ENCODE measurements at regions of chr14 and their contacts with region 1.

Region 1: GRCh38 chr14:64566651-64567122 is 16.9 kb downstream of the PPP1R36 start:
- DNase-seq: no peak
- H3K4me3 ChIP-seq: no peak overlapping the region
- H3K27ac ChIP-seq: peak overlapping the region; percentile 37 to 77 (median 62)
- H3K4me1 ChIP-seq: peaks cover 0 to 24% (median 5%) of the 10 kb centered on the region in 4 donors
- H3K27me3 ChIP-seq: no peaks in the 10 kb centered on the region
- CTCF ChIP-seq: no peak
- EP300 ChIP-seq: no peak
- POLR2A ChIP-seq: no peak

Region 2: DNA sequence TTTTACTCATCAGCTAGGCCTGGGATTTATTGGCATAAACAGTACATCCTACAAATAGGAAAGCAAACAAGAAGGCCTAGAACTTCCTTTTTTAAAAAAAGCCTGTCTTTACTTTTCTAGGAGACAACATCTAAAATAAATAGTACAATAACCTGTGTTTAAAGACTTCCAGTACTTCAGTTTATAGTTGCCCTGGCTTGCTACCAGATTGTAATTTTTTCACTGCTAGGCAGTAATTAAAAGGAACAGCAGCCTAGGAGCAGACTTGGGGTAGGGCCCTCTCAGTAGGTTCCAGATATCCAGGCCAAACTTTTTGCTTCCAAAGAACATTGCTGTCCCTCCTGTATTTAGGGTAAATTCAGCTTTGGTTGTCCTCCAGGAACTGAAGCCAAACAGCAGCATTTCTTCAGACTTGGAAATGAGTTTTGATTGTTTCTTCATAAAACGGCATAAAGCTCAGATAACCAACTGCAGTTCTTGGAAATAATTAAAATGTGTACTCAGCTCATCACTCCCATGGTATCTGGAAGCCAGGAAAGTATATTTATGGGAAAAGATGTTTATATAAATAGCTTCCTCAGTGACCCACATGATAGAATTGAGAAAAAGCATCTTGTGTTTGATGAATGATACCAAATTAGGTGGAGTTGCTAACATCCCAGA is 44.8 kb after region 1 on chr14:
- in situ Hi-C with region 1: no loop called
- intact Hi-C with region 1: loop called (anchors 2 kb)
- DNase-seq: no peak
- H3K4me3 ChIP-seq: no peak overlapping the region
- H3K27ac ChIP-seq: peak overlapping the region; percentile 71 to 73 (median 71)
- H3K4me1 ChIP-seq: peaks cover 12 to 47% (median 20%) of the 10 kb centered on the region in 4 donors
- H3K27me3 ChIP-seq: no peaks in the 10 kb centered on the region
- CTCF ChIP-seq: no peak
- EP300 ChIP-seq: no peak
- POLR2A ChIP-seq: no peak

Region 3: DNA sequence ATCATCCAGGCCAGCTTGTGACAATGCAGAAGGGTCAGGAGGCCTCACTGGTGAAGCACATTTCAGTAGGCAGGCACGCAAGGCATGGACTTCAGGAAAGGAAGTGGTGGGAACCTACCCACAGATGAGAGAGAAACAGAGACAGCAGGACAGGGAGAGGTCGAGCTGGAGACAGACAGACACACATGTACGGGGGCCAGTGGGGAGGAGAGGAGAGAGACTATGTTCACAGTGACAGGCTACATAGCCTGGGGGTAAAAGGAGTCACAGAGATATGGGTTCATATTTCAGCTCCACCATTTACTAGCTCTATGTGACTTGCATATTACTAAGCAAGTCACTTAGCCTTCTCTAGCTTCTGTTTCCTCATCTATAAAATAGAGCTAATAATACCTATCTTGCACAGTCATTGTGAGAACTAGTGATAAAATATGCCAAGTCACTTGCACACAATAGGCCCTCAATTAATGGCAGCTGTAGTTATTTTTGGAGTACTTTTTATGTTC is 754.7 kb after region 1 on chr14:
- in situ Hi-C with region 1: no loop called
- intact Hi-C with region 1: no loop called
- DNase-seq: no peak
- H3K4me3 ChIP-seq: no peak overlapping the region
- H3K27ac ChIP-seq: no peak overlapping the region
- H3K4me1 ChIP-seq: peaks cover 0 to 3% (median 0%) of the 10 kb centered on the region in 4 donors
- H3K27me3 ChIP-seq: no peaks in the 10 kb centered on the region
- CTCF ChIP-seq: no peak
- EP300 ChIP-seq: no peak
- POLR2A ChIP-seq: no peak